Activated T-helper 2 cell treated with anti-CD3 and anti-CD28 coated beads, Interferon-gamma antibody, Interleukin-2, Interleukin-4, amounts not matched to agents 10 μg/mL and 5 μg/mL and 100 μg/mL, durations not matched to agents 14 hours and 24 hours and 36 hours (primary cell): ENCODE measurements at regions of chr1 and their contacts with region 1.

Region 1: GRCh38 chr1:31038360-31038759 is 27.2 kb downstream of the PUM1 start:
- DNase-seq: no peak
- H3K4me3 Mint-ChIP-seq: no peak overlapping the region
- H3K27ac Mint-ChIP-seq: peak overlapping the region; percentile 40
- H3K4me1 Mint-ChIP-seq: peaks cover 50% of the 10 kb centered on the region
- H3K27me3 Mint-ChIP-seq: no peaks in the 10 kb centered on the region

Region 2: DNA sequence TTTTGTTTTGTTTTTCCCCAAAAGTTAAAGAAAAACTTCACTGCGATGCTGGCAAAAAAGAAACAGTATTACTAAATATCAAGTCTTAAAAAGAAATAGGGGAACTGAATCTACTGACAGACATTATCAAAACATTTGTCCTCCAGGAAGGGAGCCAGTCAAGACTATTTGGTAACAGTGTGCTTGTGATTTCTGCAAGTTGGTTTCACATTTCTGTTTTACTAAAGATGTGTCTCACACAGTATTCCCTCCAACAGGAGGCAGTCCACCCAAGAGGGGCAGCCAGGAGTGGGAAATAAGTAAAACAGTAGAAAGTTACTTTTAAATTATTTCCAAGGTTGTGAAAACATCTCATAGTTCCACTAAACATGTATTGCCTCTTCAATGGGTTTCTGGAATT is 55.4 kb before region 1 on chr1:
- intact Hi-C with region 1: loop called (anchors 10 kb)
- DNase-seq: no peak
- H3K4me3 Mint-ChIP-seq: no peak overlapping the region
- H3K27ac Mint-ChIP-seq: no peak overlapping the region
- H3K4me1 Mint-ChIP-seq: peaks cover 48% of the 10 kb centered on the region
- H3K27me3 Mint-ChIP-seq: no peaks in the 10 kb centered on the region

Region 3: GRCh38 chr1:31027693-31028526 is 10.4 kb before region 1 on chr1:
- intact Hi-C with region 1: loop called (anchors 1 kb)
- DNase-seq: no peak
- H3K4me3 Mint-ChIP-seq: no peak overlapping the region
- H3K27ac Mint-ChIP-seq: peak overlapping the region; percentile 5
- H3K4me1 Mint-ChIP-seq: peaks cover 54% of the 10 kb centered on the region
- H3K27me3 Mint-ChIP-seq: no peaks in the 10 kb centered on the region

Region 4: DNA sequence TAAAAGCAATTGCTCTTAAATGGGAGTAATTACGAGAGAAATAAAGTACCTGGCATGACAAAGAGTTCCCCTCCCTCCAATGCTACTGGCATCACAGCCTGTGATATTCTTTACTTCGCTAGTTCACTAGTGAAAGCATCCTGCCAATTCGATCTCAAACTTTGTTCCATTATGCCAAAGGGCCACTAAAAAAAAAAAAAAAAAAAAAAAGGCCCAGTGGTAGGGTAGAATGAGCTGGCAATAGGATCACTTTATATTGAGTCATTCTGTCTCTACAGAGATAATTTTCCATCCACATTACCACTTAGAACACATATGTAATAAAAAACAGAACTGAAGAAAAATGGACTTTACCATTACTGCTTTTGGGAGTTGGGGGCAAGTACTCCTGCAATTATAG is 16.0 kb after region 1 on chr1:
- intact Hi-C with region 1: loop called (anchors 1 kb)
- DNase-seq: no peak
- H3K4me3 Mint-ChIP-seq: no peak overlapping the region
- H3K27ac Mint-ChIP-seq: peak overlapping the region; percentile 84
- H3K4me1 Mint-ChIP-seq: peaks cover 42% of the 10 kb centered on the region
- H3K27me3 Mint-ChIP-seq: no peaks in the 10 kb centered on the region